Heart right ventricle (tissue), 16 donors: ENCODE measurements at regions of chr1 and their contacts with region 1.

Region 1: DNA sequence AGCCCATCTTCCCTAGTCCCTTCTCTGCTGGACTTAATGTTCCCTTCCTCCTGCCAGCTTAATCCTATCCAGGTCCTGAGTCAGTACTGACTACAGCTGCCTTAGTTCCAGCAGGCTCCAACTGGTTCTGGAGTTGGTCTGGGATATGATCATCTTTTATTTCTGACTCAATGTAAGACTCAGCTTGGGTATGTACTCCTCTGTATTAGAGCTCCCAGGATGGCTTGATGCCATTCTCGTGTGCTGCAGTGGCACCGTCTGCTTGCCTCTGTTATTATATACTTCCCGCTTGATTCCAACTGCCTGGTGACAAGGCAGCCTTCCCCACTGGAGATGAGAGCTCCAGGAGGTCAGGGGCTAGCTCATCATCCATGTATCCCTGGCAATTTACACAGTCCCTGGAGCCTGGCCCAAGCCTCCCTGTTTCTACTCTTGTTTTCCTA is 164.4 kb upstream of the DPT start:
- DNase-seq: peak in 1 of 2 donors; percentile 13
- ATAC-seq: peak; percentile 85 to 98 (median 94)
- H3K4me3 ChIP-seq: no peak overlapping the region
- H3K27ac ChIP-seq: peak overlapping the region in 9 of 10 donors; percentile 18 to 79 (median 60)
- H3K4me1 ChIP-seq: peaks cover 0 to 12% (median 0%) of the 10 kb centered on the region in 9 donors
- H3K27me3 ChIP-seq: no peaks in the 10 kb centered on the region
- CTCF ChIP-seq: no peak

Region 2: GRCh38 chr1:168728473-168729404 is 164.6 kb before region 1 on chr1 and contains the start of gene DPT:
- intact Hi-C with region 1: loop called in 1 of 10 experiments (anchors 5 kb)
- DNase-seq: peak; percentile 20 to 44
- ATAC-seq: peak; percentile 31 to 84 (median 80)
- H3K4me3 ChIP-seq: peak within 1 kb of the TSS in 8 of 10 donors; percentile 31 to 55 (median 50)
- H3K27ac ChIP-seq: peak within 1 kb of the TSS in 8 of 10 donors; percentile 43 to 73 (median 63)
- H3K4me1 ChIP-seq: peaks cover 0 to 6% (median 0%) of the 10 kb centered on the region in 9 donors
- H3K27me3 ChIP-seq: no peaks in the 10 kb centered on the region
- CTCF ChIP-seq: no peak
- total RNA-seq, gene DPT: 25.4 to 61.2 (median 39.3) TPM

Region 3: DNA sequence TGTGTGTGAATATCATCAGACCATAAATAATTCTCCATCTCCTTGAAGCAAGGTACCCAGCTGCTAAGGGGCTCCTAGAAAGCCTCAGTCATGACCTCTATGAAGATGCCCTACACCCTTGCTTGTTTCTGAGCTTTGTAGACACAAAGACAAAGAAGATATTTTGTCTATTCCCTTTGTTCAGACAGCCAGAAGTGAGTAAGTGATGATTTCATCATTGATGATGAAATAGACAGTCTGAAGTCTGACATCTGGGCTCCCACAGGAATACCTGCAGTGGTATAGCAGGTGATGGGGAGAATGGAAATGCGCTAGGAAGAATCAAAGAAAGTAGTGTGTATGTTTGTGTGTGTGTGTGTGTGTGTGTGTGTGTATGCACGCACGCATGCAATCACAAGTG is 82.2 kb before region 1 on chr1:
- intact Hi-C with region 1: no loop called
- DNase-seq: no peak
- ATAC-seq: no peak
- H3K4me3 ChIP-seq: no peak overlapping the region
- H3K27ac ChIP-seq: no peak overlapping the region
- H3K4me1 ChIP-seq: no peaks in the 10 kb centered on the region
- H3K27me3 ChIP-seq: no peaks in the 10 kb centered on the region
- CTCF ChIP-seq: no peak

Region 4: DNA sequence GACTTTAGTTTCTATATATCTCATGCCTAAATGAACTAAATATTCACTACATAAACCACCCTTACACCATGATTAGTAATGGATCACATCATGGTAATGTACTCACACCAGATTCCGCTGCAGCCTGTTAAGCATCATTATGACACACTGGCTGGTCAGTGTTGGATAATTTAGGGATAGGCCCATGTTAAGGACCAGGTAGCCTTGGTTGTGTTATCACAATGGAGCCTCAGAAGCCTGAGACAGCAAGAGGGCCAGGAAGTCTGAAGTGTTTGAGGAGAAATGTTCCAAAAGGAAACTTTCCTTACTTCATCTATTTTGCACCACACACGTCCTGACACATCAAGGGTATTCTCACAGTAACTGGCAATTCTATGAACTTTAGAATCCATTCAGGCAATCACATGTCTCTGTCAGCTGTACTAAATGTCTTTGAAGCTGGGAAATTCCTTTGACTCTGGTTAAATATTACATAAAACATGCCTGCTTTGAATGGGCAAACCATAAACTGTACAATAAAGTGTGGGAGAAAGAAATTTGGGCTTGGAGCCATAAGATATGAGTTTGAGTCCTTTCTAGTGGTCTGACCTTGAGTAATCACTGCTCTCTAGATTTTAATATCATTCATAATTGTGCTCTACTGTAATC is 59.0 kb before region 1 on chr1:
- intact Hi-C with region 1: loop called in 1 of 10 experiments (anchors 10 kb)
- DNase-seq: no peak
- ATAC-seq: peak in 6 of 8 donors; percentile 23 to 68 (median 62)
- H3K4me3 ChIP-seq: no peak overlapping the region
- H3K27ac ChIP-seq: peak overlapping the region in 5 of 10 donors; percentile 17 to 61 (median 50)
- H3K4me1 ChIP-seq: peaks cover 0 to 37% (median 18%) of the 10 kb centered on the region in 9 donors
- H3K27me3 ChIP-seq: no peaks in the 10 kb centered on the region
- CTCF ChIP-seq: no peak